ENCODE measurements at regions of chr17 and their contacts with region 1.

Region 1: GRCh38 chr17:27601069-27601975 is 29.7 kb upstream of the LGALS9 start:
- DNase-seq: peak; percentile 86
- ATAC-seq: peak; percentile 68
- H3K4me3 ChIP-seq: no peak overlapping the region
- H3K4me3 Mint-ChIP-seq: no peak overlapping the region
- H3K27ac ChIP-seq: no peak overlapping the region
- H3K27ac Mint-ChIP-seq: no peak overlapping the region
- H3K4me1 ChIP-seq: peaks cover 0 to 4% of the 10 kb centered on the region in 2 donors
- H3K4me1 Mint-ChIP-seq: peaks cover 2% of the 10 kb centered on the region
- H3K27me3 ChIP-seq: no peaks in the 10 kb centered on the region
- H3K27me3 Mint-ChIP-seq: no peaks in the 10 kb centered on the region
- CTCF ChIP-seq: peak; percentile 95

Region 2: GRCh38 chr17:27245230-27245696 is 356.1 kb before region 1 on chr17:
- CTCF ChIA-PET with region 1: interaction called, 322 read pairs
- POLR2A ChIA-PET with region 1: no interaction called
- intact Hi-C with region 1: loop called (anchors 1 kb)
- DNase-seq: peak; percentile 79
- ATAC-seq: peak; percentile 97
- H3K4me3 ChIP-seq: no peak overlapping the region
- H3K4me3 Mint-ChIP-seq: peak overlapping the region; percentile 33
- H3K27ac ChIP-seq: no peak overlapping the region
- H3K27ac Mint-ChIP-seq: peak overlapping the region; percentile 53
- H3K4me1 ChIP-seq: peaks cover 9 to 21% of the 10 kb centered on the region in 2 donors
- H3K4me1 Mint-ChIP-seq: peaks cover 27% of the 10 kb centered on the region
- H3K27me3 ChIP-seq: no peaks in the 10 kb centered on the region
- H3K27me3 Mint-ChIP-seq: no peaks in the 10 kb centered on the region
- CTCF ChIP-seq: peak; percentile 74

Region 3: DNA sequence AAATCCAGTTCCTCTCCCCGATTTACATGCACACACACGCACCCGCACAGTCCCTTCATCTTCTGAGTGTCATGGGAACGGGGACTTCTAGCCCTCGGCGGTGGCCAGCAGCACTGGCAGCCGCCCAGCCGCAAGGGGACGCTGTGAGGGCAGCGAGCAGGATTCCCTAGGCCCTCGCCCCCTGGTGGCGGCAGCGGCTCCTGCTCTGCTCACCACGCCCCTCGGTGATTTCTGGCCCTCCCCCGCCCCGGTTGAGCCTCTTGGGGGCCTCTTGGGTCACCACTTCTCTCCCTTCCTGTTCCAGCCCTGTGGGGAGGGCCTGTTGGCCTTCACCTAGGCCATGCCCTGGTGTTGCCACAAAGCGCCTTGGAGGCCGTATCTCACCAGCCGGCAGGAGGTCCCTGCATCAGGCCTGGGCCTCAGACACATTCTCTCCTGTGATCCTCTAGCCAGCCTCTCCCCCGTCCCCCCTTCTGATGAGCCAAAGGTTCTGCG is 220.3 kb before region 1 on chr17:
- CTCF ChIA-PET with region 1: interaction called, 72 read pairs
- POLR2A ChIA-PET with region 1: no interaction called
- intact Hi-C with region 1: loop called (anchors 1 kb)
- DNase-seq: peak; percentile 79
- ATAC-seq: peak; percentile 95
- H3K4me3 ChIP-seq: no peak overlapping the region
- H3K4me3 Mint-ChIP-seq: no peak overlapping the region
- H3K27ac ChIP-seq: no peak overlapping the region
- H3K27ac Mint-ChIP-seq: no peak overlapping the region
- H3K4me1 ChIP-seq: peaks cover 0 to 4% of the 10 kb centered on the region in 2 donors
- H3K4me1 Mint-ChIP-seq: peaks cover 6% of the 10 kb centered on the region
- H3K27me3 ChIP-seq: peaks cover 0 to 20% (median 3%) of the 10 kb centered on the region in 4 experiments
- H3K27me3 Mint-ChIP-seq: peaks cover 18% of the 10 kb centered on the region
- CTCF ChIP-seq: peak; percentile 97

Region 4: DNA sequence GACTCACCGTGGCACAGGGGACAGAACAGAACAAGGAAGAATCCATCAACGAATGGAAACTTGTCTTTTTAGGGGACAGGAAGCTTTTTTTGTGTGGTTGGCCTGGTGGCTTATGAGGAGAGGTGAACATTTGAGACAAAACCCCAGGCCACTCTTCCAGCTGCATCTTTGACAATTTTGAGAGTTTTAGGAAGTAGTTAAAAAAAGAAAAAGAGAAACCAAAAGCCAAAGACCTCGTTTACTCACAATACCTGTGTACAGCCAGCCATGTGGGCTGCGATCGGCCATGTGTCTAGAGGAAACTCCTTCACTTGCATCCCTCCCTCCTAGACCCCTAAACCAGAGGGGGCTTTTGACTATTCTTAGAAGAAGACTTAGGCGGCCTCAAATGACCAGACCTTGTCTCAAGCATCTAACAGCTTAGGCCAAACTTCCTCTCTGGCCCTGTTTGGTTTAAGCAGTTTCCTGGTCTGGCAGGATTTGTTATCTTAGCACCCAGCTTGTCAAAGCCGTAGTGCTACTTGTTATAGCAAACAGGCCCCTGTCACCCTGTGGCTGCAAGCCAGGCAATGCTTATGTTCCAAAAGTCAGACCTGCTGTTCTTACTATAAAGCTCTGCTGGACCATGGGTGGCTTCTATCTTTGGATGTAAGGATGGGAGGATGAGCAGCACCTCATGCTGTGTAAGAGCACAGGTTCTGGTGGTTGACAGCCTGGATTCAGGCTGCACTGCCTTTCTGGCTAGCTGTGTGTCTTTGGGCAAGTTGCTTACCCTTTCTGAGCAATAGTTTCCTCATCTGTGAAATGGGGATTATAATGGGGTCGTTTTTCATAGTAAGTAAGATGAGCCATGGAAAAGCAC is 127.3 kb before region 1 on chr17:
- CTCF ChIA-PET with region 1: interaction called, 14 read pairs
- POLR2A ChIA-PET with region 1: no interaction called
- intact Hi-C with region 1: no loop called
- DNase-seq: peak; percentile 71
- ATAC-seq: no peak
- H3K4me3 ChIP-seq: peak overlapping the region in 4 of 5 experiments; percentile 13 to 38 (median 20)
- H3K4me3 Mint-ChIP-seq: peak overlapping the region; percentile 81
- H3K27ac ChIP-seq: peak overlapping the region; percentile 80 to 89
- H3K27ac Mint-ChIP-seq: peak overlapping the region; percentile 92
- H3K4me1 ChIP-seq: peaks cover 35 to 63% of the 10 kb centered on the region in 2 donors
- H3K4me1 Mint-ChIP-seq: peaks cover 69% of the 10 kb centered on the region
- H3K27me3 ChIP-seq: no peaks in the 10 kb centered on the region
- H3K27me3 Mint-ChIP-seq: no peaks in the 10 kb centered on the region
- CTCF ChIP-seq: no peak

Region 5: GRCh38 chr17:27578718-27579085 is 22.6 kb before region 1 on chr17:
- CTCF ChIA-PET with region 1: interaction called, 23 read pairs
- POLR2A ChIA-PET with region 1: no interaction called
- intact Hi-C with region 1: no loop called
- DNase-seq: no peak
- ATAC-seq: peak; percentile 45
- H3K4me3 ChIP-seq: no peak overlapping the region
- H3K4me3 Mint-ChIP-seq: no peak overlapping the region
- H3K27ac ChIP-seq: no peak overlapping the region
- H3K27ac Mint-ChIP-seq: no peak overlapping the region
- H3K4me1 ChIP-seq: no peaks in the 10 kb centered on the region
- H3K4me1 Mint-ChIP-seq: peaks cover 4% of the 10 kb centered on the region
- H3K27me3 ChIP-seq: no peaks in the 10 kb centered on the region
- H3K27me3 Mint-ChIP-seq: no peaks in the 10 kb centered on the region
- CTCF ChIP-seq: no peak

Region 6: GRCh38 chr17:27654654-27655524 is 53.6 kb after region 1 on chr17:
- CTCF ChIA-PET with region 1: interaction called, 395 read pairs
- POLR2A ChIA-PET with region 1: interaction called, 6 read pairs
- intact Hi-C with region 1: loop called (anchors 1 kb)
- DNase-seq: peak; percentile 79
- ATAC-seq: peak; percentile 88
- H3K4me3 ChIP-seq: no peak overlapping the region
- H3K4me3 Mint-ChIP-seq: no peak overlapping the region
- H3K27ac ChIP-seq: no peak overlapping the region
- H3K27ac Mint-ChIP-seq: no peak overlapping the region
- H3K4me1 ChIP-seq: peaks cover 3 to 5% of the 10 kb centered on the region in 2 donors
- H3K4me1 Mint-ChIP-seq: peaks cover 6% of the 10 kb centered on the region
- H3K27me3 ChIP-seq: no peaks in the 10 kb centered on the region
- H3K27me3 Mint-ChIP-seq: no peaks in the 10 kb centered on the region
- CTCF ChIP-seq: peak; percentile 96

Region 7: GRCh38 chr17:27674335-27674734 is 73.0 kb after region 1 on chr17:
- CTCF ChIA-PET with region 1: no interaction called
- POLR2A ChIA-PET with region 1: no interaction called
- intact Hi-C with region 1: no loop called
- DNase-seq: no peak
- ATAC-seq: no peak
- H3K4me3 ChIP-seq: no peak overlapping the region
- H3K4me3 Mint-ChIP-seq: no peak overlapping the region
- H3K27ac ChIP-seq: no peak overlapping the region
- H3K27ac Mint-ChIP-seq: no peak overlapping the region
- H3K4me1 ChIP-seq: no peaks in the 10 kb centered on the region
- H3K4me1 Mint-ChIP-seq: no peaks in the 10 kb centered on the region
- H3K27me3 ChIP-seq: no peaks in the 10 kb centered on the region
- H3K27me3 Mint-ChIP-seq: peaks cover 14% of the 10 kb centered on the region
- CTCF ChIP-seq: no peak